K562 (cell line): ENCODE measurements at regions of chr5 and their contacts with region 1.

Region 1: DNA sequence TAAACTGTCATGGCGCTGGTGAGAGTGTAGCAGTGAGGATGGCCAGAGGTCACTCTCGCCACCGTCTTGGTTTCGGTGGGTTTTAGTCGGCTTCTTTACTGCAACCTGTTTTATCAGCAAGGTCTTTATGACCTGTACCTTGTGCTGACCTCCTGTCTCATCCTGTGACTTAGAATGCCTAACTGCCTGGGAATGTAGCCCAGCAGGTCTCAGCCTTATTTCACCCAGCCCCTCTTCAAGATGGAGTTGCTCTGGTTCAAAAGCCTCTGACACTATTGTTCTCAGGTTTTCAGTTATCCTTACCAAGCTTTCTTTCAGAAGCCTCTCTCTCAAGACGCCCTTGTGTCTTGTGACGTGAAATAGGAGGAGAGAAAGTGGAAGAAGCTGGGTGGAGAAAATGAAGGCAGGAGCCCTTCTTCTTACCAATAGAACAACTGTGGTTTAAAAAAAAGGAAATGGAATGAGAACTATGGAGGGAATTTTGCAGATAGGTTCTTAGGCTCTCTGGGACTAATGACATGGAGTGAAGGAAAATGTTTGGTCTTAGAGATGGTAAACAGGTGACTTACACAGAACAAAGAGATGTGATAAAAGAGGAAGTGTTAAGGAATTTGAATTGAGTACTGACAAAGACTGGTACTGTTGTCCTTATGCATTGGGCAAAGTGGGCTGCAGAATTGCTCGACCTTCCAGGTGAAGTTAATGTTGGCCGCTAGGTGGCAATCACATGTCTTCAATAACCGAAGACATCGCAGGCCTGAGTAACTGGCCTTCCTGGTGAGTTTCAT is 133.3 kb upstream of the RAI14 start:
- DNase-seq: peak; percentile 77 to 88 (median 79)
- ATAC-seq: peak; percentile 88
- H3K4me3 ChIP-seq: no peak overlapping the region
- H3K27ac ChIP-seq: no peak overlapping the region; the same call in 2 of the 3 replicates
- H3K4me1 ChIP-seq: peaks cover 14 to 35% of the 10 kb centered on the region in 2 experiments; a peak in 3 of 5 replicates
- H3K27me3 ChIP-seq: no peaks in the 10 kb centered on the region
- CTCF ChIP-seq: peak; percentile 80 to 92 (median 84)
- EP300 ChIP-seq: no peak
- POLR2A ChIP-seq: no peak
- RAD21 ChIP-seq: peak; percentile 92 to 95

Region 2: DNA sequence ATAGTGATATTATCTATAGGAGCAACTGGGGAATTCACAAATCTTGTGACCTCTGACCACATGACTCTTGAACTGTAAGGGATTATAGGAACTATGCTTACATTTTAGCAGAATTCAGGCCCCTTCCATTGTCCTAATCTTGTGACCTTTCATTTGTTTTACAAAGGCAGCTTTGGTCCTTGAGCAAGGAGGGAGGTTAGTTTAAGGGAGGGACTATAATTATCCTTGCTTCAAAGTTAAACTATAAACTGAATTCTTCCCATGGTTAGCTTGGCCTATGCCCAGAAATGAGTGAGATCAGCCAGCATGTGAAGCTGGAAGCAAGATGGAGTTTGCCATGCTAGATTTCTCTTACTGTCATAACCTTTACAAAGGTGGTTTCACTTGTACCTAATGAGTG is 1030.9 kb before region 1 on chr5:
- CTCF ChIA-PET with region 1: no interaction called
- POLR2A ChIA-PET with region 1: no interaction called
- in situ Hi-C with region 1: no loop called
- intact Hi-C with region 1: no loop called
- DNase-seq: no peak
- ATAC-seq: no peak
- H3K4me3 ChIP-seq: no peak overlapping the region
- H3K27ac ChIP-seq: no peak overlapping the region
- H3K4me1 ChIP-seq: peaks cover 0 to 4% of the 10 kb centered on the region in 2 experiments; a peak in 1 of 5 replicates
- H3K27me3 ChIP-seq: peaks cover 0 to 7% of the 10 kb centered on the region in 2 experiments; a peak in 2 of 5 replicates
- CTCF ChIP-seq: no peak
- EP300 ChIP-seq: no peak
- POLR2A ChIP-seq: no peak
- RAD21 ChIP-seq: no peak

Region 3: GRCh38 chr5:34538026-34538672 is 15.4 kb after region 1 on chr5:
- CTCF ChIA-PET with region 1: interaction called, 11 read pairs
- POLR2A ChIA-PET with region 1: interaction called, 6 read pairs
- in situ Hi-C with region 1: no loop called
- intact Hi-C with region 1: loop called (anchors 1 kb)
- DNase-seq: peak; percentile 48 to 73 (median 55)
- ATAC-seq: peak; percentile 97
- H3K4me3 ChIP-seq: no peak overlapping the region
- H3K27ac ChIP-seq: no peak overlapping the region
- H3K4me1 ChIP-seq: peaks cover 0 to 3% of the 10 kb centered on the region in 2 experiments; a peak in 1 of 5 replicates
- H3K27me3 ChIP-seq: no peaks in the 10 kb centered on the region
- CTCF ChIP-seq: peak; percentile 71 to 83 (median 81)
- EP300 ChIP-seq: no peak
- POLR2A ChIP-seq: no peak
- RAD21 ChIP-seq: peak; percentile 64 to 78

Region 4: GRCh38 chr5:34686762-34687268 is 164.0 kb after region 1 on chr5:
- CTCF ChIA-PET with region 1: no interaction called
- POLR2A ChIA-PET with region 1: no interaction called
- in situ Hi-C with region 1: no loop called
- intact Hi-C with region 1: loop called (anchors 5 kb)
- DNase-seq: peak; percentile 78 to 95 (median 83)
- ATAC-seq: peak; percentile 97
- H3K4me3 ChIP-seq: no peak overlapping the region
- H3K27ac ChIP-seq: peak overlapping the region; percentile 81
- H3K4me1 ChIP-seq: peaks cover 13 to 29% of the 10 kb centered on the region in 2 experiments; a peak in 4 of 5 replicates
- H3K27me3 ChIP-seq: no peaks in the 10 kb centered on the region
- CTCF ChIP-seq: peak; percentile 40 to 55 (median 54); a peak in 4 of 6 replicates
- EP300 ChIP-seq: peak; percentile 64
- POLR2A ChIP-seq: peak; percentile 51; the same call in 1 of the 2 replicates
- RAD21 ChIP-seq: peak; percentile 54 to 66

Region 5: DNA sequence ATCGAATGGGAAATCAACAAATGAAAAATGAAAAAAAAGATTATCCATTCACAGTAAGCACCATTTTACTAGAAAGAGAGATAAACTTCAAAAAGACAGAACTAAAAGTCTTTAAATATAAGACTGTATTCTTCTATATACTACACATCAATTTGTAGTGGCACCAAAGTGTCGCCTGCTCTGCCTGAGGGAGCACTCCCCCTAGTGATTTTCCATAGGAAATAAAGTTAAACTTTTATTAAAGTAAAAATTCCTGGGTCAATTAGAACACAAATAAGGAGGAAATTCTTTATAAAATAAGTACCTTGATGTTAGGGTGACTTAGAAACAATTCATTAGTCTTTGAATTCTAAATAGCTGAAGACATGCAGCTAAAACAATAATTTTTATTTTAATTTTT is 382.8 kb after region 1 on chr5:
- CTCF ChIA-PET with region 1: interaction called, 10 read pairs
- POLR2A ChIA-PET with region 1: interaction called, 5 read pairs
- in situ Hi-C with region 1: no loop called
- intact Hi-C with region 1: no loop called
- DNase-seq: peak in 2 of 4 experiments; percentile 34 to 41
- ATAC-seq: peak; percentile 56
- H3K4me3 ChIP-seq: no peak overlapping the region
- H3K27ac ChIP-seq: no peak overlapping the region
- H3K4me1 ChIP-seq: peaks cover 5 to 6% of the 10 kb centered on the region in 2 experiments; a peak in 4 of 5 replicates
- H3K27me3 ChIP-seq: no peaks in the 10 kb centered on the region
- CTCF ChIP-seq: peak; percentile 45 to 73 (median 50); a peak in 4 of 6 replicates
- EP300 ChIP-seq: no peak
- POLR2A ChIP-seq: no peak
- RAD21 ChIP-seq: peak; percentile 37 to 50; a peak in 3 of 4 replicates